ENCODE measurements at regions of chr18 and their contacts with region 1.

Region 1: GRCh38 chr18:3151399-3152264 is 68.1 kb downstream of the MYOM1 start:
- DNase-seq: no peak
- H3K4me3 ChIP-seq: no peak overlapping the region
- H3K27ac ChIP-seq: no peak overlapping the region
- H3K4me1 ChIP-seq: no peaks in the 10 kb centered on the region
- H3K27me3 ChIP-seq: no peaks in the 10 kb centered on the region
- CTCF ChIP-seq: peak in 3 of 4 experiments; percentile 51 to 79 (median 54)
- EP300 ChIP-seq: no peak
- POLR2A ChIP-seq: no peak

Region 2: GRCh38 chr18:3472681-3473544 is 321.3 kb after region 1 on chr18:
- intact Hi-C with region 1: loop called (anchors 10 kb)
- DNase-seq: no peak
- H3K4me3 ChIP-seq: no peak overlapping the region
- H3K27ac ChIP-seq: no peak overlapping the region
- H3K4me1 ChIP-seq: no peaks in the 10 kb centered on the region
- H3K27me3 ChIP-seq: no peaks in the 10 kb centered on the region
- CTCF ChIP-seq: no peak
- EP300 ChIP-seq: no peak
- POLR2A ChIP-seq: no peak